IMR-90 (cell line): ENCODE measurements at regions of chr12 and their contacts with region 1.

Region 1: DNA sequence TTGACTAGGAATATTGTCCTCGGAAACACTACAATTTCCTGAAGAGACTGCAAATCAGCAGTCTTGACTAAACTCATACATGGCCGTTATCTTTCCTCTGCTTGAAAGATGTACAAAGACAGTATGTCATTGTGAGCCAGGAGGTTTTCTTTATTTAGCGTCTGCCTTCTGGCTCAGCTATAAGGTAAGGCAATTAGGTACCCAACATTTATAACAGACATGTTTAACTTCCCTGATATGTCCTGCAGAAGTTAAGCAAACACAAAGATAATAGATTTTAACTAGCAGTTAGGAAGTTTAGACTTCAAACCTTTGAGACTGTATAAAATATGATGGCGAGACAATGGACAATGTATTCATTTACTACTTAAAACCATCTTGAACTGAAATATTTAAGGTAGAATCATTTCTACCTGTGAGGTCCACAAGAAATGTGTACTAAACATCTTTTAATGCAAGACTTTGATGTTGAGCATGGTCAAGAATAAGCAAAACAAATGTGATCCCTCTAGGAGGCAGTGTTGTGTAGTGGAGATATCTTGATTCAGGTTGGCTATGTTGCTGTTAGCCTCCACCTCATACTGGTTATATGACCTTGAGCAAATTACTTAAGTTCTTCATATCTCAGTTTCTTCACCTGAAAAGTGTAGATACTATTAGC is 96.2 kb upstream of the EEA1 start:
- DNase-seq: peak; percentile 75
- ATAC-seq: peak; percentile 91
- H3K4me3 ChIP-seq: no peak overlapping the region
- H3K27ac ChIP-seq: no peak overlapping the region
- H3K4me1 ChIP-seq: no peaks in the 10 kb centered on the region
- H3K27me3 ChIP-seq: no peaks in the 10 kb centered on the region
- CTCF ChIP-seq: peak; percentile 72
- POLR2A ChIP-seq: no peak
- RAD21 ChIP-seq: peak; percentile 87

Region 2: GRCh38 chr12:93127582-93128331 is 102.5 kb after region 1 on chr12:
- CTCF ChIA-PET with region 1: no interaction called
- POLR2A ChIA-PET with region 1: no interaction called
- dilution Hi-C with region 1: no loop called
- in situ Hi-C with region 1: no loop called
- intact Hi-C with region 1: loop called (anchors 5 kb)
- DNase-seq: peak; percentile 92
- ATAC-seq: peak; percentile 93
- H3K4me3 ChIP-seq: no peak overlapping the region
- H3K27ac ChIP-seq: no peak overlapping the region
- H3K4me1 ChIP-seq: peaks cover 8% of the 10 kb centered on the region
- H3K27me3 ChIP-seq: no peaks in the 10 kb centered on the region
- CTCF ChIP-seq: peak; percentile 47
- POLR2A ChIP-seq: no peak
- RAD21 ChIP-seq: peak; percentile 40; the same call in 1 of the 2 replicates

Region 3: DNA sequence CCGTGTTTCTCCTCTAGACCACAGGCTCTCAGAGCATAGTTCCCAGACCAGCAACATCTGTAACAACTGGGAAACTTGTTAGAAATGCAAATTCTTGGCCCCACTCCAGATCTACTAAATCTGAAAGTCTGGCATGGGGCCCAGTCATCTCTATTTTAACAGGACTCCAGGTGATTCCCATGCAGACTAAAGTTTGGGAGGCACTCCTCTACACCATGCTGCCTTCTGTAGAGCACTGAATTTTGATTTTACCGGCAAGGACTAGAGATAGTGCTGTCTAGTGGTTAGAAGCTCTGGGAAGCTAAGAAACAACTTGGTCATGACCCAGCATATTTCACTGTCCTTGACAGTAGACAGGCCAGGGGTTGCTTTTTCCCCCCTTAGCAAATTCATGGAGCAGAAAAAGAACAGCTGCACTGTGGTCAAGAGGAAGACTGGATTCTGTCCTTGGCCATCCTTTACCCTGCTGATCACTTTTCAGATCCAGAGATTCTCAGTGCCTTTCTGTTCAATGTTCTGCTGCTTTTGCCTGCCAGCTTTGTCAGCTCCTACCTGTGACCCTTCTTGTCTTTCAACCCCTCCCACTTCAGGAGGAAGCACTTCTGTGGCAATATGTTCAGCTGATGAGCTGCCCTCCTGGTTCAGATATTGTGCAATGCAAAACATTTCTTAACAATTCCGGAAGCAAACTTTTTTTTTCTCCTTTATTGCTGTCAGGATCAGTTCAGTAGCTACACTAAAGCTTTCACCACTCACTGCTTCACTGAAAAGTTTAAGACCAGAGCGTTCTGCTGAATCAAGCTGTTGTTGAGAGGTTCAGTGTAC is 218.6 kb after region 1 on chr12:
- CTCF ChIA-PET with region 1: no interaction called
- POLR2A ChIA-PET with region 1: no interaction called
- dilution Hi-C with region 1: no loop called
- in situ Hi-C with region 1: no loop called
- intact Hi-C with region 1: loop called (anchors 1 kb)
- DNase-seq: peak; percentile 78
- ATAC-seq: peak; percentile 69
- H3K4me3 ChIP-seq: no peak overlapping the region
- H3K27ac ChIP-seq: peak overlapping the region; percentile 18; the same call in 1 of the 2 replicates
- H3K4me1 ChIP-seq: peaks cover 7% of the 10 kb centered on the region
- H3K27me3 ChIP-seq: no peaks in the 10 kb centered on the region
- CTCF ChIP-seq: no peak
- POLR2A ChIP-seq: no peak
- RAD21 ChIP-seq: no peak

Region 4: DNA sequence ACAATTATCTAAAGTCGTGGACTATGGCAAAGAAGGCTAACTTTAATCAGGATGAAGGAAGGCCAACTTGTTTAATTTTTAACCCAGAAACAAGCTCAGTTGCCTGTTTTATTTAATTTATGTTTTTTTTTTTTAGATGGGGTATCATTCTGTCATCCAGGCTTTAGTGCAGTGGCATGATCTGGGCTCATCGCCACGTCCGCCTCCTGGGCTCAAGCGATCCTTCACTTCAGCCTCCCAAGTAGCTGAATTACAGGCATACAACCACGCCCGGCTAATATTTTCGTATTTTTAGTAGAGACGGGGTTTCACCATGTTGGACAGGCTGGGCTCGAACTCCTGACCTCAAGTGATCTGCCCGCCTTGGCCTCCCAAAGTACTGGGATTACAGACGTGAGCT is 372.1 kb after region 1 on chr12:
- CTCF ChIA-PET with region 1: no interaction called
- POLR2A ChIA-PET with region 1: no interaction called
- dilution Hi-C with region 1: no loop called
- in situ Hi-C with region 1: no loop called
- intact Hi-C with region 1: loop called (anchors 2 kb)
- DNase-seq: no peak
- ATAC-seq: no peak
- H3K4me3 ChIP-seq: no peak overlapping the region
- H3K27ac ChIP-seq: no peak overlapping the region
- H3K4me1 ChIP-seq: no peaks in the 10 kb centered on the region
- H3K27me3 ChIP-seq: no peaks in the 10 kb centered on the region
- CTCF ChIP-seq: no peak
- POLR2A ChIP-seq: no peak
- RAD21 ChIP-seq: no peak